ENCODE measurements at regions of chr12 and their contacts with region 1.

Region 1: GRCh38 chr12:106030210-106031175 is 108.3 kb downstream of the NUAK1 start:
- DNase-seq: peak; percentile 93
- ATAC-seq: peak; percentile 76
- H3K4me3 ChIP-seq: peak overlapping the region; percentile 49
- H3K27ac ChIP-seq: peak overlapping the region; percentile 87
- H3K4me1 ChIP-seq: peaks cover 43% of the 10 kb centered on the region
- H3K27me3 ChIP-seq: no peaks in the 10 kb centered on the region
- CTCF ChIP-seq: no peak

Region 2: GRCh38 chr12:105934274-105934673 is 96.2 kb before region 1 on chr12:
- CTCF ChIA-PET with region 1: no interaction called
- POLR2A ChIA-PET with region 1: no interaction called
- intact Hi-C with region 1: loop called (anchors 1 kb)
- DNase-seq: peak; percentile 99
- ATAC-seq: peak; percentile 97
- H3K4me3 ChIP-seq: peak overlapping the region; percentile 30; the same call in 1 of the 2 replicates
- H3K27ac ChIP-seq: peak overlapping the region; percentile 60
- H3K4me1 ChIP-seq: peaks cover 25% of the 10 kb centered on the region
- H3K27me3 ChIP-seq: no peaks in the 10 kb centered on the region
- CTCF ChIP-seq: no peak

Region 3: DNA sequence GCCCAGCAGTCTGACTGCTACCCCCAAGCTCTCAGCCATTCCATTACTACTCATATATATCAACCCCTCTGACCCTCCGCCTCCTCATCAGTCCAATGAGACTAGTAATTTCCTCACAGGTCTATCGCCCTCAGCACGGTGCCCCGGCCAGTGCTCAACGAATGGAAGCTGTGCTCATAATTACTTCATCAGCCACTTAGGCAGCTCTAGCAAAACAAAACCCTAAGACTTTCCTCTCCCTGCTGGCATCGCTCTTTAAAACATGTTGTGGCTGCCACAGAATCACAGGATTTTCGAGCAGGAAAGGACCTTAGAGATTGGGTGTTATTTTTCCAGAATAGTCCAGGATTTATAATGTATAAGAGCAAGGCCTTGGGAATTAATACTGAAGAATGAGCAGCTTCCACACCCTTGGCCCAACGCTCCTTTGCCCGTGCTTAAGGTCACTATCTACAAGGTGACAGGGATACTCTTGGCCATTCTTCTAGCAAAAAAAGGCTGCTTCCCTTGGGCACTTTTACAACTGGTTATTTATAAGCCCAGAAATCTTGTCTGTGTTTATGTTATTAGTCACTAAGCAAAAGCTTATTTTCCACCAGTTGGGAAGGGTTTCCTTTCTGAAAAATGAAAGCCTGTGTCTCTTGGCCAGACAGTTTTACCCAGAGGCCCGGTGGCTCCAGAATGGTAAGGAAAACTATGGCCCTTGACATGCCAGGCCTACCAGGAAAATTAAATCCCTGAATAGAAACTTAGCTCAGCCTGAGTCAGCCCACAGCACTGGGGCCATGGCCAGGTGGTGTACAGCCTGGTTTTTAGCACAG is 60.3 kb after region 1 on chr12:
- CTCF ChIA-PET with region 1: no interaction called
- POLR2A ChIA-PET with region 1: no interaction called
- intact Hi-C with region 1: loop called (anchors 2 kb)
- DNase-seq: peak; percentile 80
- ATAC-seq: peak; percentile 75
- H3K4me3 ChIP-seq: no peak overlapping the region
- H3K27ac ChIP-seq: peak overlapping the region; percentile 63
- H3K4me1 ChIP-seq: peaks cover 38% of the 10 kb centered on the region
- H3K27me3 ChIP-seq: no peaks in the 10 kb centered on the region
- CTCF ChIP-seq: no peak